GM12878 (cell line): ENCODE measurements at regions of chr12 and their contacts with region 1.

Region 1: DNA sequence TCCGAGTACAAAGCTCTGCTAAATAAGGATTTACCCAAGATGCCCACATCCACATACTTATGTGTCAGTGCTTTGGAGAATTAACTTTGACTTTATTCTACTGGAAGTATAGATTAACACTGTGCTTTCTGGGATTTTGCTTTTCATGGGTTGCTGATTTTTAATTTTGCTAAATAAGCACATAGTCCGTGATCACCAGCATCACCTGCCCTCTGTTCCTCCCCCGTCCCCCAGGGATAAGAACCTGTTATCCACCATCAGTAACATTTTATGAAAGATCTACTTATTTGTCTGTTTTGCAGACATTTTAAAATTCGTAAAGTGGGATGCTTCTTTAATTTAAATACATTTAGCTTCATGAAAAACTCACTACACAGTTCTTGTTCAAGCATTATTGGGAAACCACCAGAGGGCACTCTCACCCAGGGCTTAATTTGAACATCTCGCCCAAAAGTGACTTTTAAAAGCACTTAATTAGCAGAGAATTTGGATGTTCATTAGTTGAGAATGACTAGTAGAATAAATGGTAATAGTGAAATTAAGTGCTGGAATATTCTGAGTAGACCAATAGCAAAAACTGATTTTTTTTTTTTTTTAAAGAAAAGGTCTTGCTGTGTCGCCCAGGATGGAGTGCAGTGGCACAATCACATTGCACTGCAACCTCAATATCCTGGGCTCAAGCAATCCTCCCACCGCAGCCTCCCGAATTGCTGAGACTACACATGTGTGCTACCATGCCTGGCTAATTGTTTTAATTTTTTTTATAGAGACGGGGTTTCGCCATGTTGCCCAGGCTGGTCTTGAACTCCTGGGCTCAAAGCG is 35.7 kb downstream of the MRPL42 start:
- DNase-seq: no peak
- ATAC-seq: peak; percentile 58
- H3K4me3 ChIP-seq: no peak overlapping the region
- H3K27ac ChIP-seq: no peak overlapping the region
- H3K4me1 ChIP-seq: peaks cover 5% of the 10 kb centered on the region; the same call in 1 of the 2 replicates
- H3K27me3 ChIP-seq: no peaks in the 10 kb centered on the region
- CTCF ChIP-seq: peak; percentile 64 to 73 (median 72)
- EP300 ChIP-seq: no peak
- POLR2A ChIP-seq: no peak
- RAD21 ChIP-seq: peak; percentile 84

Region 2: GRCh38 chr12:93514853-93515252 is 11.8 kb after region 1 on chr12:
- CTCF ChIA-PET with region 1: interaction called, 16 read pairs
- POLR2A ChIA-PET with region 1: interaction called, 3 read pairs
- RAD21 ChIA-PET with region 1: interaction called, 7 read pairs
- SMC1A ChIA-PET with region 1: interaction called, 4 read pairs
- in situ Hi-C with region 1: no loop called
- intact Hi-C with region 1: no loop called
- DNase-seq: no peak
- ATAC-seq: no peak
- H3K4me3 ChIP-seq: no peak overlapping the region
- H3K27ac ChIP-seq: no peak overlapping the region
- H3K4me1 ChIP-seq: no peaks in the 10 kb centered on the region
- H3K27me3 ChIP-seq: no peaks in the 10 kb centered on the region
- CTCF ChIP-seq: no peak
- EP300 ChIP-seq: no peak
- POLR2A ChIP-seq: no peak
- RAD21 ChIP-seq: no peak

Region 3: DNA sequence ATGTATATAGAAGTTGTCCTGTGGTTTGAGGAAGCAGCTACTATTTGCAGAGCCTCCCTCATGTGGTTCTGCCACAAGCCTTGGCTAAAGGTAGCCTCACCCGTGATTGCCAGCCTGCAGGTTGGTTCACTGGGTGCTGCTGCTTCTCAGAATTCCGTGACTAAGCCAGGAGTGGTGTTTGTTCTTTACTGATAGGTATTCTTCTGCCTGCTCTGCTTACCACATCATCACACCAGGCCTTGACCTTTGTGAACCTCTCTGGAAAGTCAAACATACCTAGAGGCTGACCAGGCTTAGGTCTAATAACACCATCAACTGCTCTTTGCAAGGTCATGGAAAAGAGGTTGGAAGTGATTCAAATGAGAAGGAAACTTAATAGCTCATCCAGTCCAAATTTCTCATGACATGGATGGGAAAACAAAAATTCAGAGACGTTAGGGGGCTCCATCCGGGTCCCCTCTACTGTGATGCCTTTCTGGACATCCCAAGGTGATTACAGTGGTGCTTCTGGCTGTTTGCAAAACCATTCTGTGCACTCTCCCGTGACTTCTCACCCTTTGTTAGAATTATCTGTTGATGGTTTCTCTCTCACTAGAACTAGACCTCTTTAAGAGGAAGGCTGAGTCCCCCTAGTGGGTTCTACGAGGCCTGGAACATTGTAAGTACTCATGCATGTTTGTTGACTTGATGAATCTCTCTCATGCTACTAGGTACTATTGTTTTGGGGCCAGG is 61.0 kb after region 1 on chr12:
- CTCF ChIA-PET with region 1: interaction called, 38 read pairs
- POLR2A ChIA-PET with region 1: interaction called, 9 read pairs
- RAD21 ChIA-PET with region 1: interaction called, 20 read pairs
- SMC1A ChIA-PET with region 1: interaction called, 23 read pairs
- in situ Hi-C with region 1: no loop called
- intact Hi-C with region 1: loop called (anchors 2 kb)
- DNase-seq: no peak
- ATAC-seq: peak; percentile 71
- H3K4me3 ChIP-seq: no peak overlapping the region
- H3K27ac ChIP-seq: no peak overlapping the region
- H3K4me1 ChIP-seq: no peaks in the 10 kb centered on the region
- H3K27me3 ChIP-seq: no peaks in the 10 kb centered on the region; a peak in 1 of 4 replicates
- CTCF ChIP-seq: peak; percentile 28 to 59 (median 45); a peak in 5 of 6 replicates
- EP300 ChIP-seq: no peak
- POLR2A ChIP-seq: no peak
- RAD21 ChIP-seq: peak; percentile 74

Region 4: GRCh38 chr12:93742110-93742934 is 239.3 kb after region 1 on chr12:
- CTCF ChIA-PET with region 1: interaction called, 7 read pairs
- POLR2A ChIA-PET with region 1: no interaction called
- RAD21 ChIA-PET with region 1: interaction called, 6 read pairs
- SMC1A ChIA-PET with region 1: interaction called, 8 read pairs
- in situ Hi-C with region 1: no loop called
- intact Hi-C with region 1: loop called (anchors 2 kb)
- DNase-seq: no peak
- ATAC-seq: peak; percentile 99
- H3K4me3 ChIP-seq: peak overlapping the region; percentile 67
- H3K27ac ChIP-seq: no peak overlapping the region
- H3K4me1 ChIP-seq: no peaks in the 10 kb centered on the region
- H3K27me3 ChIP-seq: no peaks in the 10 kb centered on the region
- CTCF ChIP-seq: peak; percentile 28 to 58 (median 37); a peak in 4 of 6 replicates
- EP300 ChIP-seq: no peak
- POLR2A ChIP-seq: peak; percentile 31; the same call in 1 of the 2 replicates
- RAD21 ChIP-seq: peak; percentile 84

Region 5: GRCh38 chr12:93766796-93767523 is 263.9 kb after region 1 on chr12:
- CTCF ChIA-PET with region 1: interaction called, 11 read pairs
- POLR2A ChIA-PET with region 1: no interaction called
- RAD21 ChIA-PET with region 1: no interaction called
- SMC1A ChIA-PET with region 1: interaction called, 5 read pairs
- in situ Hi-C with region 1: no loop called
- intact Hi-C with region 1: no loop called
- DNase-seq: no peak
- ATAC-seq: peak; percentile 77
- H3K4me3 ChIP-seq: no peak overlapping the region
- H3K27ac ChIP-seq: no peak overlapping the region
- H3K4me1 ChIP-seq: no peaks in the 10 kb centered on the region
- H3K27me3 ChIP-seq: no peaks in the 10 kb centered on the region
- CTCF ChIP-seq: peak; percentile 19 to 57 (median 49); a peak in 4 of 6 replicates
- EP300 ChIP-seq: no peak
- POLR2A ChIP-seq: no peak
- RAD21 ChIP-seq: peak; percentile 74

Region 6: GRCh38 chr12:93979189-93979588 is 476.2 kb after region 1 on chr12:
- CTCF ChIA-PET with region 1: interaction called, 22 read pairs
- POLR2A ChIA-PET with region 1: no interaction called
- RAD21 ChIA-PET with region 1: interaction called, 10 read pairs
- SMC1A ChIA-PET with region 1: interaction called, 5 read pairs
- in situ Hi-C with region 1: no loop called
- intact Hi-C with region 1: loop called (anchors 2 kb)
- DNase-seq: peak; percentile 8
- ATAC-seq: peak; percentile 42; the same call in 2 of the 3 replicates
- H3K4me3 ChIP-seq: no peak overlapping the region
- H3K27ac ChIP-seq: no peak overlapping the region
- H3K4me1 ChIP-seq: no peaks in the 10 kb centered on the region
- H3K27me3 ChIP-seq: no peaks in the 10 kb centered on the region; a peak in 2 of 4 replicates
- CTCF ChIP-seq: peak; percentile 51 to 65 (median 55)
- EP300 ChIP-seq: no peak
- POLR2A ChIP-seq: no peak
- RAD21 ChIP-seq: peak; percentile 84